ENCODE measurements at regions of chr19 and their contacts with region 1.

Region 1: GRCh38 chr19:12333162-12334159 is at the start of gene ZNF563:
- DNase-seq: peak; percentile 97
- H3K4me3 Mint-ChIP-seq: peak within 1 kb of the TSS; percentile 98
- H3K27ac Mint-ChIP-seq: peak within 1 kb of the TSS; percentile 97
- H3K4me1 Mint-ChIP-seq: peaks cover 32% of the 10 kb centered on the region
- H3K27me3 Mint-ChIP-seq: no peaks in the 10 kb centered on the region
- total RNA-seq, gene ZNF563: 2.3 and 4.2 TPM in 2 replicates

Region 2: DNA sequence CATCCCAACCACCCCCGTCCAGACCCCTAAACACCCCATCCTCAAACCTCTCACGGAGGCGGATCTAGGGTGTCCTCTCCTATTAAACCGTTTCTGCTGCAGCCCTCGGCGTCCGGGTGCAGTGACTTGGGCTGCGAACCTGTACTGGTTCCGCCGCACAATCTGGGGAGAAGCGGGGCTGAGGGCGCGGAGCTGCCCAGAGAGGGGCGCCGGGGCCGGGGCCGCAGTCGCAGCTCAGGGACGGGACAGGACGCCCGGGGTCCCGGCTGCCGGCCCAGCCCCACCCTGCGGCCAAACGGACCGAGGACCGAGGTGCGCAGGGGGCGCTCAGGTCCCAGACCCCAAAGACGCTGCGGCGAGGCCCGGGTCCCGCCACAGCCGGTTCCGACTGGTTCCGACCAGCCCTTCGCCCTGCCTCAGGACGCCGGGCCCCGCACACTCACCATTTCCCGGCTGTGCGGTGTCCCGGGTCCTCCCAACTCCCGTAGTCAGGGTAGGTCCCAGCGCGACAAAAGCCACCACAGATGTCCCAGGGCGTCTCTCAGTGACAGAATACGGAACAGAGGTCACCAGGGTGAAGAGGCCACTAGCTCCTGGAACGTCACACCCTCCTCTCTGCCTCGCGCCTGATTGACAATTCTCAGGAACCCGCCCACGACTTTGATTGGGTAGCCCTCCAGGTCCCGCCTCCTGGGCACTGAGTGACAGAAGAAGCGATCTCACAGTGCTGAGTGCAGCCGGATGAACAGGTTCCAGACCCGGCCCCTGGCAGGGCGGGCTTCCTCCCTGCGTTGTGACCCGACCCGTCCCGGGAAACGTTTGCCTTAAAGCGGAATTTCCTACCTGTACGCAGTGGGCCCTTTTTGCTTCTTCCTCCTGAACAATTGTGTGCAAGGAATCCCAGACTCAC is 39.0 kb before region 1 on chr19 and contains the start of gene ZNF44:
- intact Hi-C with region 1: loop called (anchors 1 kb)
- DNase-seq: peak; percentile 96
- H3K4me3 Mint-ChIP-seq: peak within 1 kb of the TSS; percentile 100
- H3K27ac Mint-ChIP-seq: peak within 1 kb of the TSS; percentile 99
- H3K4me1 Mint-ChIP-seq: peaks cover 22% of the 10 kb centered on the region
- H3K27me3 Mint-ChIP-seq: no peaks in the 10 kb centered on the region
- total RNA-seq, gene ZNF44: 8.6 and 8.7 TPM in 2 replicates

Region 3: GRCh38 chr19:12365236-12366162 is 32.0 kb after region 1 on chr19 and contains the start of gene ZNF442:
- intact Hi-C with region 1: loop called (anchors 1 kb)
- DNase-seq: peak; percentile 64
- H3K4me3 Mint-ChIP-seq: peak within 1 kb of the TSS; percentile 86
- H3K27ac Mint-ChIP-seq: no peak within 1 kb of the TSS
- H3K4me1 Mint-ChIP-seq: peaks cover 7% of the 10 kb centered on the region
- H3K27me3 Mint-ChIP-seq: peaks cover 1% of the 10 kb centered on the region
- total RNA-seq, gene ZNF442: 0.55 and 1.2 TPM in 2 replicates

Region 4: GRCh38 chr19:12400633-12401502 is 67.4 kb after region 1 on chr19 and contains the start of gene ZNF799:
- intact Hi-C with region 1: loop called (anchors 5 kb)
- DNase-seq: peak; percentile 82
- H3K4me3 Mint-ChIP-seq: peak within 1 kb of the TSS; percentile 93
- H3K27ac Mint-ChIP-seq: peak within 1 kb of the TSS; percentile 69
- H3K4me1 Mint-ChIP-seq: peaks cover 7% of the 10 kb centered on the region
- H3K27me3 Mint-ChIP-seq: no peaks in the 10 kb centered on the region
- total RNA-seq, gene ZNF799: 3.8 and 5.3 TPM in 2 replicates

Region 5: GRCh38 chr19:12425236-12425887 is 91.9 kb after region 1 on chr19:
- intact Hi-C with region 1: no loop called
- DNase-seq: no peak
- H3K4me3 Mint-ChIP-seq: no peak overlapping the region
- H3K27ac Mint-ChIP-seq: no peak overlapping the region
- H3K4me1 Mint-ChIP-seq: no peaks in the 10 kb centered on the region
- H3K27me3 Mint-ChIP-seq: no peaks in the 10 kb centered on the region

Region 6: GRCh38 chr19:12440541-12441316 is 107.3 kb after region 1 on chr19 and contains the start of gene ZNF443:
- intact Hi-C with region 1: loop called (anchors 2 kb)
- DNase-seq: peak; percentile 99
- H3K4me3 Mint-ChIP-seq: peak within 1 kb of the TSS; percentile 100
- H3K27ac Mint-ChIP-seq: peak within 1 kb of the TSS; percentile 97
- H3K4me1 Mint-ChIP-seq: peaks cover 9% of the 10 kb centered on the region
- H3K27me3 Mint-ChIP-seq: no peaks in the 10 kb centered on the region
- total RNA-seq, gene ZNF443: 4.3 and 4.5 TPM in 2 replicates

Measured in activated T-helper 2 cell treated with anti-CD3 and anti-CD28 coated beads, Interferon-gamma antibody, Interleukin-2, Interleukin-4, amounts not matched to agents 10 μg/mL and 5 μg/mL and 100 μg/mL, durations not matched to agents 14 hours and 24 hours and 36 hours (primary cell).